Ovary (tissue), 10 donors: ENCODE measurements at regions of chr15 and their contacts with region 1.

Region 1: DNA sequence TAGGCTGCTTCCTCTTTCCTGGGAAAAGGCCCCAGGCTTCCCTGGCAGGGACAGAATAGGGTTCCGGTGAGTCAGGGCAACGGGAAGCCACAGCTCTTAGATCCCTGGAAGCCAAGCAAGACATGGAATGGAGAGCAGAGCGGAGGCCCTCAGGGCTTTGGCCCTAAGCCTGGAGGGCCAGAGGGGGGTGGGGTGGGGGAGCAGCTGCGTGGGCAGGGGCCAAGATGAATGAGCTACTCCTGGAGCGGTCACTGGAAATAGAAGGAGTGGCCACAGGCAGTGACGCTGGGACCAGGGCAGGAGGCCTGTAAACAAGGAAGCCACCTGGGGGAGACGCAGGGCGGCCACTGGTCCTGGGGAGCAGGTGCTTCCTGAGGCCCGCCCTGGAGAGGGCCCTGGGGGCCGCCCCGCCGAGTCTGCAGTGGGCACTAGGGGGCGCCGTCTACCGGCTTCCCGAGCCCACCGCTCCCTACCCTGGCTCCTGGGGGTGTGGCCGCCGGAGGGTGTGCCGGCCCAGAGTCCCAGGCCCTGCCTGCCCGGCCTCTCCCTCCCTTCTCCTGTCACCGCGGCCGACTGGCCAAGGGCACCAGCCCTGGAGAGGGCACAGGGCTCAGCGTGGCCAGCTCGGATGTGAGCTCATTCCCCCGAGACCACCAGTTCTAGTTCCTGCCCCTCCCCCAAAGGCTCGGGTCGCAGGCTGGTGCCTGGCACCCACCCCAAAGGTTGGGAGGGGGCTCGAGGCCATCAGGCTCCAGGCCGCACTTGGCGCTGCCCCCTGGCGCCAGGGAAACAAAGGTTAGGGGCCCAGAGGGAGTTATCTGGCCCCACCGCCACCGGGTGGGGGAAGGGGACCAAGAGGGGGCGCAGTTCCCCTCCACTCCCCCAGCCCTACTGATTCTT is 12.1 kb downstream of the VPS18 start:
- DNase-seq: peak; percentile 82 to 90 (median 87)
- H3K4me3 ChIP-seq: peak overlapping the region; percentile 38
- H3K27ac ChIP-seq: peak overlapping the region; percentile 46 to 47
- H3K4me1 ChIP-seq: peaks cover 3% of the 10 kb centered on the region
- H3K27me3 ChIP-seq: no peaks in the 10 kb centered on the region
- CTCF ChIP-seq: peak; percentile 79 to 93 (median 90)
- EP300 ChIP-seq: no peak
- POLR2A ChIP-seq: no peak

Region 2: GRCh38 chr15:39720621-39721611 is 1185.4 kb before region 1 on chr15:
- intact Hi-C with region 1: no loop called
- DNase-seq: no peak
- H3K4me3 ChIP-seq: no peak overlapping the region
- H3K27ac ChIP-seq: no peak overlapping the region
- H3K4me1 ChIP-seq: no peaks in the 10 kb centered on the region
- H3K27me3 ChIP-seq: no peaks in the 10 kb centered on the region
- CTCF ChIP-seq: no peak
- EP300 ChIP-seq: no peak
- POLR2A ChIP-seq: no peak

Region 3: GRCh38 chr15:41022487-41023090 is 116.2 kb after region 1 on chr15:
- intact Hi-C with region 1: loop called in 3 of 4 experiments (anchors 10 kb)
- DNase-seq: peak in 2 of 5 donors; percentile 34 to 36
- H3K4me3 ChIP-seq: no peak overlapping the region
- H3K27ac ChIP-seq: no peak overlapping the region
- H3K4me1 ChIP-seq: peaks cover 3% of the 10 kb centered on the region
- H3K27me3 ChIP-seq: no peaks in the 10 kb centered on the region
- CTCF ChIP-seq: peak; percentile 13 to 50 (median 40)
- EP300 ChIP-seq: no peak
- POLR2A ChIP-seq: no peak

Region 4: DNA sequence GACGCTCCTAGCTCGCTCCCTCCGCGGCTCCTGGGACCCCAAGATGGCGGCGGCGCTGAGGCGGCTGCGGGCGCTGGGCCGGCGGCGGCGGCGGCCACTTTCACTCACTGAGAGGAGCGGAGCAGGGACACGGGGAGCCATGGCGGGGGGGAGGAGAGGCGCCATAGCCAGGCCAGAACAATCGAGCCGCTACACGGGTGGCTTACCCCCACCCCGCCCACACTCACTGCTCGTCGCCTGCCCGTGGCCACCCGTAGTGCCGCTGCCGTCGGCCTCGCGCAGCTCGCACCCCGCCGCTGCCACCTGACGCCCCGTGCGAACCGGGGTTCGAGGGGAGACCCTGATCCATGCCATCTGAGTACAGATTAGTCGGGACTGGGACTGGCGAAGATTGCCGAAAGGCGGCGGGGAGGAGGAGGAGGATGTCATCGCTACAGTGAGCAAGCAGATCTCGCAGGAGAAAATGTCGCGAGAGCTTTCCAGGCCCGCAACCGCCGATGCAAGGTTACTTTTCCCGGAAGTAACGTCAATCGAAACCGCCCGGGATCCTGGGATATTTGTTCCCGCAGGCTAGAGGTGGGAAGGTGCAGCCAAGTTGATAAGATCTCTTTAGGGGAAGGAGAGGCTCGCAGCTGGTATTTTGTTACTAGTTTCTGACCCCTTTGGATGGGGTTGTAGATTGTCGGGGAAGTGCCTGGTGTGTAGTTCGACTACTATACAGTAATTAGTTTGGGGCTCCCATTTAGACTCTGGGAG is 210.0 kb after region 1 on chr15 and contains the start of gene INO80:
- intact Hi-C with region 1: loop called in 1 of 4 experiments (anchors 10 kb)
- DNase-seq: peak; percentile 97 to 99 (median 98)
- H3K4me3 ChIP-seq: peak within 1 kb of the TSS; percentile 66
- H3K27ac ChIP-seq: peak within 1 kb of the TSS; percentile 94 to 97
- H3K4me1 ChIP-seq: peaks cover 7% of the 10 kb centered on the region
- H3K27me3 ChIP-seq: no peaks in the 10 kb centered on the region
- CTCF ChIP-seq: peak in 2 of 3 donors; percentile 38 to 54
- EP300 ChIP-seq: no peak
- POLR2A ChIP-seq: peak; percentile 56
- total RNA-seq, gene INO80: 12.0 to 36.0 (median 21.4) TPM

Region 5: DNA sequence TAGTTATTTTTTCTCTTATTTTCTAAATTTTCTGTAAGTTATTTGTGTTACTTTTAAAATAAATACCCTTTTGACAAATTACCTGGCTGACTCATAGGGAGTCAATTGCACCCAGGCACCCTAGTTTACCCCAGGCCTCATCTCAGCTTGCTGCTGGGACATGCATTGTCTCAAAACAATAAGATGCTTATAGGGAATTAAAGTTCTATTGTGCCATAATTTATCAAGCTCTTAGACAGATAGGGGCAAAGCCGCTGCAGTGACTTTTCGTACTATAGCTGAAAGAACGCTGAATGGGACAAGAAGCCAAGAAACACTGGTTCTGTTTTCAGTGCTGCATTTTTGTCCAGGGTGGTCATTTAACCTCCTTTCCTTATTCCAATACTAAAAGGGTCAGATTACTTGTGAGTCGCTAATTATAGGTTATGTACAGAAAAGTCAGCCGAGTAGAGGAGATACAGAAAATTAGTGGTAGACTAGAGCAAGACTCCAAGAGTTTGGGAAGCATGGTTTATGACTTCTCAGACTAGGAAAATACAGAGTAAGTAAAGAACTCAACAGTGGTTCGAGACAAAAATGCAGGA is 274.0 kb after region 1 on chr15:
- intact Hi-C with region 1: loop called (anchors 2 to 5 kb)
- DNase-seq: no peak
- H3K4me3 ChIP-seq: no peak overlapping the region
- H3K27ac ChIP-seq: no peak overlapping the region
- H3K4me1 ChIP-seq: no peaks in the 10 kb centered on the region
- H3K27me3 ChIP-seq: no peaks in the 10 kb centered on the region
- CTCF ChIP-seq: no peak
- EP300 ChIP-seq: no peak
- POLR2A ChIP-seq: no peak

Region 6: GRCh38 chr15:41331833-41332787 is 425.8 kb after region 1 on chr15 and contains the start of gene OIP5:
- intact Hi-C with region 1: loop called in 1 of 4 experiments (anchors 5 kb)
- DNase-seq: peak; percentile 94 to 98 (median 97)
- H3K4me3 ChIP-seq: peak within 1 kb of the TSS; percentile 74
- H3K27ac ChIP-seq: peak within 1 kb of the TSS; percentile 12 to 56
- H3K4me1 ChIP-seq: peaks cover 3% of the 10 kb centered on the region
- H3K27me3 ChIP-seq: no peaks in the 10 kb centered on the region
- CTCF ChIP-seq: peak in 2 of 3 donors; percentile 64 to 77
- EP300 ChIP-seq: no peak
- POLR2A ChIP-seq: no peak
- total RNA-seq, gene OIP5: 0.52 to 1.9 (median 0.94) TPM